Thyroid gland (tissue), 4 donors: ENCODE measurements at regions of chr7 and their contacts with region 1.

Region 1: DNA sequence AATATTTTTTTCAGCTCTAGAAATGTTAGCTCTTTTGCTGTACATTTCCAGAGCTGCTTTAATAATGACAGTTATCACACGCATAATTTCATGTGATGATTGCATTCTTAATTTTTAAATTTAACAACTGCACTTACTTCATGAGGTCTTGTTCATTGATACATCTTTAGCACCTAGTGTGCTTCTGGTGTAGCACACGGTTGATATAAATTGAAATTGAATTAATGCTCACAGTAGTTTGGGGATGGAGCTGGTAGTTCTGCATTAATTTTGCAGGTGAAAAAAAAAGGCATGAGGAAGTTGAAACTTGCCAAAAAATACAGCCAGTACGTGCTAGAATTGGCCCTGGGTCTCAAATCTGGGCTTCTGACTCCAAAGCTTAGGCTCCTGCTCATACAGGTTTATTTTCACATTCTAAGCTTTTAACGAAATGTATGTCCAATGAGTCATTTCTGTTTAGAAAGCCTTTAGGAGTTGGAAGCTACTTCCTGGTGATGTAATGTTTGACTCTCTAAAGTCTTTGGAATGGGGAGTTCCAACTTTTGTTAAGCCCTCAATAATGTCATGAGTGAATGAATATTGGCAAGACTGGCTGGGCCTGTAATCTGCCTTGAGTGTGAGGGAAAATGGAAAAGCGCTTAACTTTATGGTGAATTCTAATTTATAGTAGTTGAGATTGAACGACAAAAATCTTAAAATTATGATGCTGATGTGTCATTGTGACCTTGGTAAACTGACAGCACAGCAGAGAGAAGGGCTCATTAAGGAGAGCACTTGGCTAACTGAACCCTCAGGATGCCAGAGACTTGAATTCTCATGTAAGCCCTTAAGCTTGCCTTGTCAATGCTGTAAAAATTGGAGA is 62.4 kb downstream of the DAGLB start:
- DNase-seq: no peak
- H3K4me3 ChIP-seq: no peak overlapping the region
- H3K27ac ChIP-seq: peak overlapping the region; percentile 50 to 74 (median 69)
- H3K4me1 ChIP-seq: peaks cover 46 to 57% of the 10 kb centered on the region in 2 donors
- H3K27me3 ChIP-seq: no peaks in the 10 kb centered on the region
- CTCF ChIP-seq: no peak
- POLR2A ChIP-seq: no peak

Region 2: DNA sequence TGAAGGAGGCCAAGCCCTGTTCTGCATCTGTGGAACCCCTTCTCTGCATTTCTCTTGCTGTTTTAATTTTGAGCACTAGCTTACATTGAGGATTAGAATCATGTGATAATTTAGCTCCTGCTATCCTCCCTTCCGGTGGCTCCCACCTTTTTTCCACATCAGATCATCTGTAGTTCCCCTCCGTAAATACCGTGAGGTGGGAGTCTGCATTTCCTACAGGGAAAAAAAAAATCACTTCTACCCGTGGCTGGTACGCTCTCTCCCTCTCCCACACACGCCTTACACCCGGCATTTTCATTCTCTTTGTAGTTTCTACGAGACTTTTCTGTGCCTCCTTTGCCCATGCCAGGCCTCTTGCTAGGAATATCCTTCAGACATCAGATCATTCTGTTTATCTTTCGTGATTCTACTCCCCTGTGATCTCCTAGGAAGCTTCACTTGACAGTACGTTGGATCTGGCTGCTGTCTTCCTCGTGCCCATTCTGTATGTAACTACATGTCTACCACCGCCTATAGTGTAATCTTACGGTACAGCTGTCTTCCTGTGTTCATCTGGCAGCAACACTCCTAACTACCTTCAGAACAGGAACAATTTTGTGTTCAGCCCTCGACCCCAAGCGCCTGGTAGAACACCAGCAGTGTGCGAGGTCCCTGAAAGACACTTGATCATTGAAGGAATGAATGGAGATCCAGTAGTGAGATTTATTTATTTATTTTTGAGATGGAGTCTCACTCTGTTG is 546.4 kb before region 1 on chr7:
- intact Hi-C with region 1: no loop called
- DNase-seq: no peak
- H3K4me3 ChIP-seq: no peak overlapping the region
- H3K27ac ChIP-seq: no peak overlapping the region
- H3K4me1 ChIP-seq: no peaks in the 10 kb centered on the region
- H3K27me3 ChIP-seq: no peaks in the 10 kb centered on the region
- CTCF ChIP-seq: no peak
- POLR2A ChIP-seq: no peak

Region 3: GRCh38 chr7:6435486-6436384 is 50.4 kb after region 1 on chr7:
- intact Hi-C with region 1: loop called (anchors 10 kb)
- DNase-seq: peak; percentile 60 to 77
- H3K4me3 ChIP-seq: no peak overlapping the region
- H3K27ac ChIP-seq: peak overlapping the region in 1 of 3 donors; percentile 6
- H3K4me1 ChIP-seq: peaks cover 6 to 25% of the 10 kb centered on the region in 2 donors
- H3K27me3 ChIP-seq: no peaks in the 10 kb centered on the region
- CTCF ChIP-seq: peak; percentile 83 to 94 (median 89)
- POLR2A ChIP-seq: no peak